AG04450 (cell line): ENCODE measurements at regions of chr15 and their contacts with region 1.

Region 1: GRCh38 chr15:38563723-38564519 is 693 bp downstream of the RASGRP1 start:
- DNase-seq: no peak
- H3K4me3 ChIP-seq: peak overlapping the region; percentile 61
- H3K27ac ChIP-seq: no peak overlapping the region
- H3K27me3 ChIP-seq: peaks cover 17% of the 10 kb centered on the region
- CTCF ChIP-seq: peak; percentile 85

Region 2: GRCh38 chr15:38320181-38320580 is 243.7 kb before region 1 on chr15:
- CTCF ChIA-PET with region 1: no interaction called
- POLR2A ChIA-PET with region 1: no interaction called
- DNase-seq: no peak
- H3K4me3 ChIP-seq: no peak overlapping the region
- H3K27ac ChIP-seq: no peak overlapping the region
- H3K27me3 ChIP-seq: no peaks in the 10 kb centered on the region
- CTCF ChIP-seq: no peak

Region 3: GRCh38 chr15:38474155-38474757 is 89.7 kb before region 1 on chr15:
- CTCF ChIA-PET with region 1: interaction called, 29 read pairs
- POLR2A ChIA-PET with region 1: no interaction called
- DNase-seq: no peak
- H3K4me3 ChIP-seq: no peak overlapping the region
- H3K27ac ChIP-seq: no peak overlapping the region
- H3K27me3 ChIP-seq: no peaks in the 10 kb centered on the region
- CTCF ChIP-seq: peak; percentile 84

Region 4: GRCh38 chr15:38490242-38490922 is 73.5 kb before region 1 on chr15:
- CTCF ChIA-PET with region 1: interaction called, 10 read pairs
- POLR2A ChIA-PET with region 1: no interaction called
- DNase-seq: peak; percentile 26
- H3K4me3 ChIP-seq: no peak overlapping the region
- H3K27ac ChIP-seq: peak overlapping the region; percentile 62
- H3K27me3 ChIP-seq: no peaks in the 10 kb centered on the region
- CTCF ChIP-seq: no peak

Region 5: GRCh38 chr15:38536201-38536676 is 27.7 kb before region 1 on chr15:
- CTCF ChIA-PET with region 1: interaction called, 16 read pairs
- POLR2A ChIA-PET with region 1: no interaction called
- DNase-seq: peak; percentile 69
- H3K4me3 ChIP-seq: no peak overlapping the region
- H3K27ac ChIP-seq: no peak overlapping the region
- H3K27me3 ChIP-seq: peaks cover 2% of the 10 kb centered on the region
- CTCF ChIP-seq: no peak

Region 6: GRCh38 chr15:38635174-38635573 is 71.3 kb after region 1 on chr15:
- CTCF ChIA-PET with region 1: interaction called, 12 read pairs
- POLR2A ChIA-PET with region 1: no interaction called
- DNase-seq: no peak
- H3K4me3 ChIP-seq: no peak overlapping the region
- H3K27ac ChIP-seq: no peak overlapping the region
- H3K27me3 ChIP-seq: peaks cover 18% of the 10 kb centered on the region
- CTCF ChIP-seq: no peak

Region 7: GRCh38 chr15:38662033-38662802 is 98.3 kb after region 1 on chr15:
- CTCF ChIA-PET with region 1: interaction called, 11 read pairs
- POLR2A ChIA-PET with region 1: no interaction called
- DNase-seq: no peak
- H3K4me3 ChIP-seq: no peak overlapping the region
- H3K27ac ChIP-seq: no peak overlapping the region
- H3K27me3 ChIP-seq: peaks cover 39% of the 10 kb centered on the region
- CTCF ChIP-seq: no peak

Region 8: GRCh38 chr15:38690689-38691332 is 126.9 kb after region 1 on chr15:
- CTCF ChIA-PET with region 1: interaction called, 23 read pairs
- POLR2A ChIA-PET with region 1: no interaction called
- DNase-seq: peak; percentile 46
- H3K4me3 ChIP-seq: no peak overlapping the region
- H3K27ac ChIP-seq: no peak overlapping the region
- H3K27me3 ChIP-seq: peaks cover 2% of the 10 kb centered on the region
- CTCF ChIP-seq: peak; percentile 85

Region 9: DNA sequence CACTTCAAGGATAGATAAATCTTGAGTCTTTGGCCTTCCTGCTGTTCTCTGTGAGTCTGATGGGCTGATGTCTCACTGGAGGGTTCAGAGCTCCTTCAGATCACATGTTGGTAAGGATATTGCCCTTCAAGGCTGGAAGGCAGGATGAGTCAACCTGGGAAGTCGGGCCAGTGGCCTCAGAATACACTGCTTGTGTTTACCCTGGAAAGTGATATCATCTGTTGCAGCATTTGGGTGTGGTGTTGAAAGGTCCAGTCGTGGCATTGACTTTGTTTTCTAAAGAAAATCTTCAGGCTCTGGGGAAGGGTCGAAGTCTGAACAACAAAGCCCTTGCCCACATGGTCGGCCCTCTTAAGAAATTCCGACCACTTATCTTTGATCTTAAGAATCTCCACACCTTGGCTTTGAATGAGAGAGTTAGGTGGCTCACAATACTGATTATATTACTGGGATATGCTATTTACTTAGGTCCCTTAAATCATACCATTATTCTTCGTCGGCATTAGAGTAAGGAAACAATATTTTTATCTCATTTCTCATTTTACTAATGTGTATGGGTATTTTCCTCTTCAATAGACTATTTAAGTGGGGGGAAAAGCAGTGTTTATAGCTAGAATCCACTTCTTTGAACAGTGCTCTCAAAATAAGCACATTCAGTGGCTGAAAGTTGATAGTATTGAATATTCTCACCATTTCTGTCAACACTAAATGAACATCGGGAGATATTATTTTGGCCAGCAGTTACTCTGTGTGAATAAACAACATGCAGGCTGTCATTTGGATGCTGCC is 304.6 kb after region 1 on chr15:
- CTCF ChIA-PET with region 1: no interaction called
- POLR2A ChIA-PET with region 1: no interaction called
- DNase-seq: peak; percentile 73
- H3K4me3 ChIP-seq: no peak overlapping the region
- H3K27ac ChIP-seq: peak overlapping the region; percentile 40
- H3K27me3 ChIP-seq: no peaks in the 10 kb centered on the region
- CTCF ChIP-seq: no peak